ENCODE measurements at regions of chr2 and their contacts with region 1.

Region 1: DNA sequence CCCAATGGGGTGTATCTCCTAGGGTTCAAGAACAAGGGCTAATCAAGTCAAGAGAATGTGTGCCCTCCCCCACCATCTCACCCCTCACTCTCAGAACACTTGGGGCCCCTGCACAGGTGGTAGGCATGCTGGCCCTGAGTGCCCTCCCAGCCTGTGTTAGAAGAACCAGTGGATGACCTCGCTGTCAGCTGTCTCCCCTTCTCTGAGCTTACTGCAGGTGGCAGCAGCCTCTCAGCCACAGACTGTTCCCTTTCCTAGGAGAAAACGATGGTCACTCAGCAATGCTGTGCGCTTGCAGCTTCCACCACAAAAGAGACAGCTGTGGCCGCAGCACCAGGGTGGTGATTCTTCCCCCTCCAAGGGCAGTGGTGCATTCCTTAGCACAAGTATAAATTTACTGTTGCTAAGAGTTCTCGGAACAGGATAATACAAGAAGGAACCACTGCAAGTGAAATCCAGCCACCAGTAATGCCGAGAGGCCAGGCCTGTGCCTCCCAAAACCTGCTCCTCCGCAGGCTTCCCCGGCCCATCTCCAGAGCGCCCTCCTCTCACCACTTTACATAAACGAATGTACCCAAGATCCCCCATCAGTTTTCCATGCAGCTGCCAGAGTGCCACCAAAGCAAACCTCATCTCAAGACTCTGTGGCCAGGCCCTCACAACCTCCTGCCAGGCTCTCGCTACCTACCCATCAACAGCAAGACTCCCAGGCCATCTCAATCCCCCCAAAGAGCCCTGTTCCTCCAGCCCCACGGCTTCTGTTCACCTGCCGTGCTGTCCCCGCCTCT is 935 bp upstream of the RAMP1 start:
- DNase-seq: no peak
- ATAC-seq: peak; percentile 73
- H3K4me3 Mint-ChIP-seq: peak overlapping the region; percentile 47
- H3K27ac Mint-ChIP-seq: no peak overlapping the region
- H3K4me1 Mint-ChIP-seq: peaks cover 7% of the 10 kb centered on the region
- H3K27me3 Mint-ChIP-seq: peaks cover 45% of the 10 kb centered on the region
- CTCF ChIP-seq: no peak

Region 2: GRCh38 chr2:237731663-237732062 is 126.8 kb before region 1 on chr2:
- CTCF ChIA-PET with region 1: no interaction called
- POLR2A ChIA-PET with region 1: no interaction called
- intact Hi-C with region 1: no loop called
- DNase-seq: no peak
- ATAC-seq: peak; percentile 44
- H3K4me3 Mint-ChIP-seq: no peak overlapping the region
- H3K27ac Mint-ChIP-seq: no peak overlapping the region
- H3K4me1 Mint-ChIP-seq: peaks cover 48% of the 10 kb centered on the region
- H3K27me3 Mint-ChIP-seq: no peaks in the 10 kb centered on the region
- CTCF ChIP-seq: no peak

Region 3: GRCh38 chr2:237895544-237896506 is 37.3 kb after region 1 on chr2:
- CTCF ChIA-PET with region 1: interaction called, 8 read pairs
- POLR2A ChIA-PET with region 1: no interaction called
- intact Hi-C with region 1: loop called (anchors 2 kb)
- DNase-seq: no peak
- ATAC-seq: no peak
- H3K4me3 Mint-ChIP-seq: no peak overlapping the region
- H3K27ac Mint-ChIP-seq: no peak overlapping the region
- H3K4me1 Mint-ChIP-seq: peaks cover 47% of the 10 kb centered on the region
- H3K27me3 Mint-ChIP-seq: no peaks in the 10 kb centered on the region
- CTCF ChIP-seq: no peak

Region 4: DNA sequence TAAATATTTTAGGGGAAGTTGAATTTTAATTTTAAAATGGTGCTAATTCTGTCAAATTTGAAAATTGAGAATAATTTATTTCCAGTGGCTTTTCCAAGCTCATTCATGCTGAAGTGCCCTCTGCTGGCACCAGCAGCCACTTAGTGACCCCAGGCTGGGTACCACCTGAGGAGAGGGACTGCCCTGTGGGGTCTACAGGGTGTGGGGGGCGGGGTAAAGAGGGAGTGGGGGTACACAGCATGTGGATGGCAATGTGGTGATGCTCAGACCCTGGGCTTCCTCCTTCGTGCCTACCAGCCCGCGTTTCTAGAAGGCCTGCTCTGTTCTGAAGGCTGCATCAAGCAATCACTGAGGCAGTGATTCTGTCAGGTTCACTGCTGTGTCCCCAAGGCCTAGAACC is 157.2 kb after region 1 on chr2:
- CTCF ChIA-PET with region 1: interaction called, 5 read pairs
- POLR2A ChIA-PET with region 1: no interaction called
- intact Hi-C with region 1: loop called (anchors 2 kb)
- DNase-seq: no peak
- ATAC-seq: no peak
- H3K4me3 Mint-ChIP-seq: no peak overlapping the region
- H3K27ac Mint-ChIP-seq: no peak overlapping the region
- H3K4me1 Mint-ChIP-seq: peaks cover 7% of the 10 kb centered on the region
- H3K27me3 Mint-ChIP-seq: no peaks in the 10 kb centered on the region
- CTCF ChIP-seq: no peak

Region 5: GRCh38 chr2:238158527-238159070 is 300.1 kb after region 1 on chr2 and contains the start of gene ERFE:
- CTCF ChIA-PET with region 1: no interaction called
- POLR2A ChIA-PET with region 1: no interaction called
- intact Hi-C with region 1: loop called (anchors 5 kb)
- DNase-seq: peak; percentile 58
- ATAC-seq: peak; percentile 90
- H3K4me3 Mint-ChIP-seq: peak within 1 kb of the TSS; percentile 70
- H3K27ac Mint-ChIP-seq: no peak within 1 kb of the TSS
- H3K4me1 Mint-ChIP-seq: peaks cover 12% of the 10 kb centered on the region
- H3K27me3 Mint-ChIP-seq: peaks cover 11% of the 10 kb centered on the region
- CTCF ChIP-seq: no peak
- total RNA-seq, gene ERFE: not detected in 2 replicates

Region 6: GRCh38 chr2:238263204-238264071 is 404.9 kb after region 1 on chr2:
- CTCF ChIA-PET with region 1: interaction called, 19 read pairs
- POLR2A ChIA-PET with region 1: no interaction called
- intact Hi-C with region 1: loop called (anchors 1 kb)
- DNase-seq: peak; percentile 53
- ATAC-seq: peak; percentile 57
- H3K4me3 Mint-ChIP-seq: no peak overlapping the region
- H3K27ac Mint-ChIP-seq: no peak overlapping the region
- H3K4me1 Mint-ChIP-seq: peaks cover 3% of the 10 kb centered on the region
- H3K27me3 Mint-ChIP-seq: no peaks in the 10 kb centered on the region
- CTCF ChIP-seq: peak; percentile 54

Region 7: GRCh38 chr2:238784671-238785527 is 926.4 kb after region 1 on chr2:
- CTCF ChIA-PET with region 1: no interaction called
- POLR2A ChIA-PET with region 1: no interaction called
- intact Hi-C with region 1: loop called (anchors 10 kb)
- DNase-seq: no peak
- ATAC-seq: no peak
- H3K4me3 Mint-ChIP-seq: no peak overlapping the region
- H3K27ac Mint-ChIP-seq: no peak overlapping the region
- H3K4me1 Mint-ChIP-seq: no peaks in the 10 kb centered on the region
- H3K27me3 Mint-ChIP-seq: peaks cover 2% of the 10 kb centered on the region
- CTCF ChIP-seq: no peak

Measured in activated B cell treated with CpG ODN at 0.5 μM for 24 hours (primary cell).